Activated CD8-positive, alpha-beta memory T cell treated with anti-CD3 and anti-CD28 coated beads, Interleukin-2, amount 10 ng/mL, durations not matched to agents 7 days and 5 days (primary cell): ENCODE measurements at regions of chr2 and their contacts with region 1.

Region 1: DNA sequence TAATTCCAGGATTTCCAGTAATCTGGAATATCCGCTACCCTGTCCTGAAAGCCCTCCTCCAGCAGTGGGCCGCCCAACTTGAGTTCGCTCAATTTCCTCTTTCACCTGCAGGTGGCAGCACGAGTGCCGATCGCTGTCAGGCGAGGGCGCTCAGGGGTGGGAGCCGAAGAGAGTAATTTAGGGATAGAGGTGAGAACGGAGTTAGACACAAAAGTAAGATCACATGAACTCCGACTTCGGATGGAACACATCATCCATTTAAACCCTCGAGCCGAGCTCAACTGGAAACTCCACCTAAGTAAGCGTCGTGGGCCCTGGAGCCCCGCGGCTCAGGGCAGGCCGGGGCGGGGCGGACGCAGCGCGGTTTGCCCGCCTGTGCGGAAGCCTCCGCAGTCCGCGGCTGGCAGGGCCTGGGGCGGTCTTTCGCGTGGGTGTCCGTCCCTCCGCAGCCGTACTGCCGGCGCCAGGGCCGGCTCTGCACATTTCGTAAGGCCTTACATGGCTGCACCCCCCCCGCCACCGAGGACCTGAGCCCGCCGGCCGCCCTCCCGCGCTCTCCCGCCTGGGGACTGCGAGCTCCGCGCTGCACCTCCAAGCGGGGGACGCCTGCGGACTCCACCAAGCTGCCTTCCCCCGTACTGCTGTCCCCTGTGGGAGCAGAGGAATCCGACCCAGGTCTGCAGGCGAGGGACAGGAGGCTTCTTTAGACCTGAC is 61.2 kb downstream of the SEMA4F start:
- DNase-seq: peak; percentile 86
- ATAC-seq: peak; percentile 97
- H3K4me3 Mint-ChIP-seq: peak overlapping the region; percentile 77
- H3K27ac Mint-ChIP-seq: no peak overlapping the region
- H3K4me1 Mint-ChIP-seq: peaks cover 9% of the 10 kb centered on the region
- H3K27me3 Mint-ChIP-seq: peaks cover 27% of the 10 kb centered on the region

Region 2: GRCh38 chr2:74735544-74735943 is 20.3 kb after region 1 on chr2:
- CTCF ChIA-PET with region 1: interaction called, 10 read pairs
- DNase-seq: no peak
- ATAC-seq: no peak
- H3K4me3 Mint-ChIP-seq: no peak overlapping the region
- H3K27ac Mint-ChIP-seq: no peak overlapping the region
- H3K4me1 Mint-ChIP-seq: no peaks in the 10 kb centered on the region
- H3K27me3 Mint-ChIP-seq: peaks cover 36% of the 10 kb centered on the region

Region 3: DNA sequence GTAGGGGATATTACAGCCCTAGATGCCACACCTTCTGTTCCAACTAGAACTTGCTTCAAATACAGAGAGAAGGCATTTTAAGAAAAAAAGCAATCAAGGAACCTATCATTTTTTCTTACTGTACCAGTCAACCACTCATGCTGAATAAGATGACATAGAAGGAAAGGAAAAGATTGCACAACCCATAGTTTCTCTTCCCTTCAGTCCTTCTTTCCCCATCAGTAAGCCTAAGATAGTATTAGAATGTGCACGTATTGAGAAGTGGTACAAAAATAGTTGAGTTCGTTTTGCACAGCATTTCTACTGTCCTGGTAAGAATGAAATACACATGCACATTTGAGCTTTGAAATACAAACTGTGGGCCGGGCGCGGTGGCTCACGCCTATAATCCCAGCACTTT is 91.7 kb after region 1 on chr2:
- CTCF ChIA-PET with region 1: no interaction called
- DNase-seq: no peak
- ATAC-seq: no peak
- H3K4me3 Mint-ChIP-seq: no peak overlapping the region
- H3K27ac Mint-ChIP-seq: no peak overlapping the region
- H3K4me1 Mint-ChIP-seq: no peaks in the 10 kb centered on the region
- H3K27me3 Mint-ChIP-seq: peaks cover 22% of the 10 kb centered on the region